Mucosa of descending colon (tissue), 3 donors: ENCODE measurements at regions of chrX and their contacts with region 1.

Region 1: GRCh38 chrX:39149761-39150160 is 348.5 kb downstream of the MID1IP1 start:
- DNase-seq: peak; percentile 60 to 89 (median 79)
- ATAC-seq: peak; percentile 86
- H3K4me3 ChIP-seq: no peak overlapping the region
- H3K4me1 ChIP-seq: no peaks in the 10 kb centered on the region
- CTCF ChIP-seq: peak; percentile 47

Region 2: GRCh38 chrX:38774249-38774648 is 375.5 kb before region 1 on chrX:
- intact Hi-C with region 1: loop called in 1 of 2 experiments (anchors 10 kb)
- DNase-seq: no peak
- ATAC-seq: no peak
- H3K4me3 ChIP-seq: no peak overlapping the region
- H3K4me1 ChIP-seq: no peaks in the 10 kb centered on the region
- CTCF ChIP-seq: no peak

Region 3: GRCh38 chrX:39361736-39362135 is 212.0 kb after region 1 on chrX:
- intact Hi-C with region 1: no loop called
- DNase-seq: no peak
- ATAC-seq: no peak
- H3K4me3 ChIP-seq: no peak overlapping the region
- H3K4me1 ChIP-seq: no peaks in the 10 kb centered on the region
- CTCF ChIP-seq: no peak